Heart right ventricle (tissue), 16 donors: ENCODE measurements at regions of chr7 and their contacts with region 1.

Region 1: DNA sequence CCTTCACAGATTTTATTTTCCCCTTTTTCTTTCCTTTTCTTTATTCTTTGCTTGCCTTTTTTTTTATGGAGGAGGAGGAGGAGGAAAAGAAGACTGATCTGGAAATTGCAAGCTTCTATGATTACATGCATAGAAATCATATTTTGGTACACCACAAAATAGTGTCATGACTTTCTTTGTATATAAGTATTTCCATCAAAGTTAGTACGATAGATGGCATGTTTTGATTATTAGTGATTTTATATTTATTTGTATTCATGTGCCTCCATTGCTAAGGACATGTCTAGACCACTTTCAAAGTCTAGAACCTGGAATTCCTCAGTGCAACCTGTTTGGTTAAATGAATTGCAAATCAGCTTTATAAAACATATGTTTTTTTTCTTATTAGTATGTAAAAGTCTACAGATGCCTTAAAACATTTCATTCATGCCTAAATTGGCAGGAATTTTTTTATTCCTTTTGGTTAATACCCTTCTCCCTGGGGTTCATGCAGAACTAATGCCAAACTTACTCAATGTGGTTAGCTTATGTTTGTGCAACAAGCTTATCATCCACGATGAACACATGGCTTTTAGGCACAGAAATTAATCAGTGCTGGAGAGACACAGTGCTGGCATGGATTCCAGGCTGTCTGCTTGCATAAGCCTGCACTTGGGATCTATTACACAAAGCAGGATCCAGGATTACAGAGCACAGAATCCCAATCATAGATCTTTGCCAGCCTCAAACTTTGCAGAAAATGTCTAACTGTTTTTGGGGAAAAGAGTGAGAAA is 213.1 kb downstream of the CHRM2 start:
- DNase-seq: peak; percentile 45 to 83
- ATAC-seq: peak; percentile 90 to 97 (median 94)
- H3K4me3 ChIP-seq: no peak overlapping the region
- H3K27ac ChIP-seq: peak overlapping the region in 8 of 10 donors; percentile 11 to 84 (median 70)
- H3K4me1 ChIP-seq: peaks cover 0 to 50% (median 25%) of the 10 kb centered on the region in 9 donors
- H3K27me3 ChIP-seq: no peaks in the 10 kb centered on the region
- CTCF ChIP-seq: no peak

Region 2: GRCh38 chr7:136874238-136875032 is 207.1 kb before region 1 on chr7:
- intact Hi-C with region 1: loop called in 4 of 10 experiments (anchors 5 to 10 kb)
- DNase-seq: no peak
- ATAC-seq: no peak
- H3K4me3 ChIP-seq: no peak overlapping the region
- H3K27ac ChIP-seq: peak overlapping the region in 3 of 10 donors; percentile 39 to 92 (median 85)
- H3K4me1 ChIP-seq: peaks cover 0 to 64% (median 8%) of the 10 kb centered on the region in 9 donors
- H3K27me3 ChIP-seq: peaks cover 0 to 30% (median 19%) of the 10 kb centered on the region in 7 donors
- CTCF ChIP-seq: peak in 8 of 9 donors; percentile 8 to 48 (median 28)

Region 3: GRCh38 chr7:136923111-136923510 is 158.4 kb before region 1 on chr7:
- intact Hi-C with region 1: loop called in 1 of 10 experiments (anchors 10 kb)
- DNase-seq: no peak
- ATAC-seq: peak in 1 of 8 donors; percentile 32
- H3K4me3 ChIP-seq: no peak overlapping the region
- H3K27ac ChIP-seq: no peak overlapping the region
- H3K4me1 ChIP-seq: peaks cover 0 to 34% (median 17%) of the 10 kb centered on the region in 9 donors
- H3K27me3 ChIP-seq: no peaks in the 10 kb centered on the region
- CTCF ChIP-seq: no peak

Region 4: GRCh38 chr7:136993377-136993776 is 88.1 kb before region 1 on chr7:
- intact Hi-C with region 1: loop called in 1 of 10 experiments (anchors 5 kb)
- DNase-seq: no peak
- ATAC-seq: peak; percentile 25 to 87 (median 73)
- H3K4me3 ChIP-seq: no peak overlapping the region
- H3K27ac ChIP-seq: peak overlapping the region; percentile 2 to 79 (median 56)
- H3K4me1 ChIP-seq: peaks cover 0 to 38% (median 4%) of the 10 kb centered on the region in 9 donors
- H3K27me3 ChIP-seq: no peaks in the 10 kb centered on the region
- CTCF ChIP-seq: no peak

Region 5: GRCh38 chr7:137169282-137169698 is 87.8 kb after region 1 on chr7:
- intact Hi-C with region 1: no loop called
- DNase-seq: peak; percentile 26 to 57
- ATAC-seq: peak; percentile 65 to 83 (median 72)
- H3K4me3 ChIP-seq: no peak overlapping the region
- H3K27ac ChIP-seq: no peak overlapping the region
- H3K4me1 ChIP-seq: peaks cover 0 to 4% (median 0%) of the 10 kb centered on the region in 9 donors
- H3K27me3 ChIP-seq: no peaks in the 10 kb centered on the region
- CTCF ChIP-seq: peak; percentile 36 to 78 (median 61)